Activated T-helper 1 cell treated with anti-CD3 and anti-CD28 coated beads, Interleukin-12 subunit alpha, Interleukin-12 subunit beta, Interleukin-2, Interleukin-4 antibody, amounts not matched to agents 30 ng/mL and 10 ng/mL and 1 ng/mL, durations not matched to agents 14 hours and 24 hours and 36 hours (primary cell): ENCODE measurements at regions of chr11 and their contacts with region 1.

Region 1: GRCh38 chr11:13343931-13344717 is 66.5 kb downstream of the BMAL1 start:
- DNase-seq: peak; percentile 53
- H3K4me3 Mint-ChIP-seq: no peak overlapping the region
- H3K27ac Mint-ChIP-seq: peak overlapping the region; percentile 29
- H3K4me1 Mint-ChIP-seq: peaks cover 41% of the 10 kb centered on the region
- H3K27me3 Mint-ChIP-seq: no peaks in the 10 kb centered on the region

Region 2: GRCh38 chr11:12963792-12964536 is 380.2 kb before region 1 on chr11:
- intact Hi-C with region 1: loop called (anchors 1 kb)
- DNase-seq: peak; percentile 21
- H3K4me3 Mint-ChIP-seq: no peak overlapping the region
- H3K27ac Mint-ChIP-seq: no peak overlapping the region
- H3K4me1 Mint-ChIP-seq: no peaks in the 10 kb centered on the region
- H3K27me3 Mint-ChIP-seq: peaks cover 15% of the 10 kb centered on the region

Region 3: DNA sequence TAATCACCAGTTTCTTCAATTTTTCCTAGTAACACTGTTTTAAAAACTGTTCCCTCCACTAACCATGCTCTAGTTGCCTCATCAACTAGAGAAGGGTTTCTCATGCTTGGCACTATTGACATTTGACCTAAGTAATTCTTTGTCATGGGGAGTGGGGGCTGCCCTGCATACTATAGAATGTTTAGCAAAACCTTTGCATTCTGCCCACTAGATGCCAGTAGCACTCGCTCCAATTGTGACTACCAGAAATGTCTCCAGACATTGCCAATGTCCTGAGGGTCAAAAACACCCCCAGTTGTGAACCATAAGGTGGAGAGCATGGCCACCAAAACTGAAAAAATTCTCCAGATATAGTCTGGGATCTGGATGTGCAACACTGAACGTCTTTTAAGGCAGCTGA is 94.1 kb before region 1 on chr11:
- intact Hi-C with region 1: loop called (anchors 1 kb)
- DNase-seq: no peak
- H3K4me3 Mint-ChIP-seq: no peak overlapping the region
- H3K27ac Mint-ChIP-seq: no peak overlapping the region
- H3K4me1 Mint-ChIP-seq: no peaks in the 10 kb centered on the region
- H3K27me3 Mint-ChIP-seq: peaks cover 19% of the 10 kb centered on the region

Region 4: GRCh38 chr11:13384908-13385640 is 41.0 kb after region 1 on chr11:
- intact Hi-C with region 1: loop called (anchors 2 kb)
- DNase-seq: no peak
- H3K4me3 Mint-ChIP-seq: no peak overlapping the region
- H3K27ac Mint-ChIP-seq: no peak overlapping the region
- H3K4me1 Mint-ChIP-seq: no peaks in the 10 kb centered on the region
- H3K27me3 Mint-ChIP-seq: no peaks in the 10 kb centered on the region